Left cardiac atrium (tissue), 4 donors: ENCODE measurements at regions of chr7 and their contacts with region 1.

Region 1: GRCh38 chr7:12638851-12639467 is 48.5 kb upstream of the ARL4A start:
- DNase-seq: no peak
- ATAC-seq: peak in 1 of 2 donors; percentile 37

Region 2: DNA sequence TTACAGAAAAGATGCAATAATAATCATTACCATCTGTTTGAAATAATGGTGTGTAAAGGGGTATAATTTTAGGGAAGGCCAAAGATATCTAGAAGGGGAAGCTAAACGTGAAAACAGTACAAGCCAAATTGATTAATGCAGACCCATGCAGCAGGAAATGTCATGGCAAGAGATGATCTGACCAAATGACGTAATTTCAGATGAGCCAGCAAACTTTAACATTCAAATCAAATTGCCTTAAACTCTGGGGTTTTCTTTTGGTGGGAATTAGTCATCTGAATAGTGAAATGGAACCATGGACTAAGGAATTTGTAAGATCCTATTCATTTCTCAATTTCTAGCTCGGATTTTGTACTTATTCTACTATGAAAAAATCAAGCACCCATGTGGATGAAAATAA is 89.9 kb before region 1 on chr7:
- intact Hi-C with region 1: no loop called
- DNase-seq: no peak
- ATAC-seq: no peak

Region 3: DNA sequence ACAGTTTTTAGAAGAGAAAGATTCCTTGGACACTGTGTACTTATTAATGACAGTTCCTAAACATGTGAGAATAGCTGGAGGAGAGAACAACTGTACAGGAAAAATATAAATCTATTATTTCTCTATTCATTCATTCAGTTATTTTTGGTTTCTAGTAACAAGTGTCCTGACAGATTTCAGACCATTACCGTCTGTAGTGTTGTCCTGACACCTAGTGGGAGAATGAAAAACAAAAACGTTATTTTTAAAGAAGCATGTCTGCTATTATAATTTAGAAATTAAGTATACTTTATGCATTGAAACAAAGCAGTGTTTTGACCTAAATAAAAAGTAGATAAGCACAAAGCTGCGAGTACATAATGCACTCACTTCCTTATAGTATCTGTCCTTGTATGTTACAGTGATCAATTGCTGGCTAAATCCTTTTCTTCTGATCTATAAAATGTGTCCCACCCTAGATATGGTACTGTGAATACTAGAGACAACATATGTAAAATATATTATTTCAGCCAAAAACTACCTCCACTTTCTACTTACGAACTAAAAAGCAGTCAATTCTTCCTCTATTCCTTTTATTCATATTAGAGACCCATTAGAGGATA is 624.1 kb after region 1 on chr7:
- intact Hi-C with region 1: loop called (anchors 1 to 10 kb)
- DNase-seq: no peak
- ATAC-seq: peak; percentile 47